ENCODE measurements at regions of chr5 and their contacts with region 1.

Region 1: DNA sequence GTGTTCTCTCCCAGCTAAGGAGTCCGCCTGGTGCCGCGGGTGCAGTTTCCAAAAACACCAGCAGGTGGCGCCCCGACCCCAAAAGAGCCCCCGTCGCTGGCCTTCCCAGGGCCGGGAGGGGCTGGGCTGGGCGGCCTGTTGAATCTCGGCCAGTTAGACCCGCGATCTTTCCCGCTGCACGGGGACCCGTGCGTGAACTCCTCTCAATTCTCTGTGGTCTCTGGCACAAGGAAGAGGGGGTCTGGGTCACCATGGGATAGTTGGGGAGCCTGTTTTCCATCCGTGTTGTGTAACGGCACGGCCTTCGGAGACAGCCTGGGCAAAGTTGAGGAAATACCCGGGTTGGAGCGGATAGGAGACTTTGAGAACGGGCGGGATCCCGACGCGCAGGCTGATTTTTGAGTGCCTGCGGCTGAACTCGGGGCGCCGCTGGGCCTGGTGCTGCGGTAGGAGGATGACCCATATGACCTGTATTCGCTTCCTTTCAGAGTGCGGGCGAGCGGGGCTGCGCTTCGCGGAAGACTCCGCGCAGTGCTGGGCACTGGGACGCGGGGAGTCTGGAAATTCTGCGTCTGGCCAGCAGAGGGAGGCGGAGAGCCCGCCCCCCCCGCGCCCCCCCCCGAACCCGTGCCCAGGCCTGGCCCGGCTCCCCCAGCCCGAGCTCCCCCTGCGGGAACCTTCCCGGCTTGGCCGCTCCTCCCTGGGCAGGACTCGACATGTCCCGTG is 7.9 kb upstream of the PSD2 start:
- DNase-seq: peak; percentile 26
- ATAC-seq: peak; percentile 93
- H3K4me3 ChIP-seq: peak overlapping the region; percentile 75
- H3K27ac ChIP-seq: no peak overlapping the region
- H3K4me1 ChIP-seq: no peaks in the 10 kb centered on the region
- H3K27me3 ChIP-seq: peaks cover 0 to 1% of the 10 kb centered on the region in 2 experiments; a peak in 3 of 4 replicates
- CTCF ChIP-seq: peak; percentile 92 to 98 (median 95)
- EP300 ChIP-seq: no peak
- POLR2A ChIP-seq: no peak
- RAD21 ChIP-seq: peak; percentile 96

Region 2: DNA sequence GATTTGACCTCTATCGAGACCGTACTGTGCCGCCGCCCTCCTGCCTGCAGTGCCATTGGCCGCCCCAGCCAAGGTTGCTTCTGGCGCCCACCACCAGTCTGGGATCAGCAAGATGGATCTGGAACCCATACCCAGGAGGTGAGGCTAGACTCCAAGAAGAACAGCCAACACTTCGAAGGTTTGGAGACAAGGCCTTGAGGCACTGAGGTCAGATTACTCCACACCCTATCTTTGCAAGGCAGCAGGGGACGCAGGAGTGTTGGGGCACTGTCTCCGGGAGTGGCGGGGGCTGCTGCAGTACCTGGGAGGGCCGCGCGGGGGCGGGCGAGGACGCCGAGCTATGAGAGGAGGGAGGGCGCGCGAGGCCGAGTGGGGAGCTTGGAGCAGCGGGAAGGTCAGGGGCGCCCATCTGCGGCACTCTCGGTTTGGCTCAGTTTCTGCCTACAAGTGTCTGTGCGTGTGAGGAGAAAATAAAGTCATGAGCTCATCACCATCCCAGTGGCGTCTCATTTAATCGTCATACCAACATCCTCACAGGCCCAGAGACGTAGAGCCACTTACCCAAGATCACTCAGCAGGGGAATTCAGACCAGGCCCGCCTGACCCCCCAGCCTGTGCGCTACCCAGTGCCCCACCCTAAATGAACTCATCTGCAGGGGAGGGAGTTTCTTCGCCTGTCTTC is 12.6 kb before region 1 on chr5:
- CTCF ChIA-PET with region 1: interaction called, 45 read pairs
- POLR2A ChIA-PET with region 1: no interaction called
- RAD21 ChIA-PET with region 1: interaction called, 13 read pairs
- SMC1A ChIA-PET with region 1: interaction called, 11 read pairs
- in situ Hi-C with region 1: no loop called
- intact Hi-C with region 1: no loop called
- DNase-seq: no peak
- ATAC-seq: peak; percentile 98
- H3K4me3 ChIP-seq: no peak overlapping the region
- H3K27ac ChIP-seq: no peak overlapping the region
- H3K4me1 ChIP-seq: peaks cover 7% of the 10 kb centered on the region; the same call in 1 of the 2 replicates
- H3K27me3 ChIP-seq: peaks cover 0 to 3% of the 10 kb centered on the region in 2 experiments; a peak in 1 of 4 replicates
- CTCF ChIP-seq: peak; percentile 78 to 98 (median 90)
- EP300 ChIP-seq: no peak
- POLR2A ChIP-seq: no peak
- RAD21 ChIP-seq: peak; percentile 47

Region 3: GRCh38 chr5:139849942-139850341 is 62.2 kb after region 1 on chr5:
- CTCF ChIA-PET with region 1: interaction called, 146 read pairs
- POLR2A ChIA-PET with region 1: interaction called, 3 read pairs
- RAD21 ChIA-PET with region 1: interaction called, 11 read pairs
- SMC1A ChIA-PET with region 1: interaction called, 41 read pairs
- in situ Hi-C with region 1: no loop called
- intact Hi-C with region 1: no loop called
- DNase-seq: no peak
- ATAC-seq: no peak
- H3K4me3 ChIP-seq: no peak overlapping the region
- H3K27ac ChIP-seq: no peak overlapping the region
- H3K4me1 ChIP-seq: no peaks in the 10 kb centered on the region
- H3K27me3 ChIP-seq: no peaks in the 10 kb centered on the region; a peak in 1 of 4 replicates
- CTCF ChIP-seq: no peak
- EP300 ChIP-seq: no peak
- POLR2A ChIP-seq: no peak
- RAD21 ChIP-seq: no peak

Region 4: DNA sequence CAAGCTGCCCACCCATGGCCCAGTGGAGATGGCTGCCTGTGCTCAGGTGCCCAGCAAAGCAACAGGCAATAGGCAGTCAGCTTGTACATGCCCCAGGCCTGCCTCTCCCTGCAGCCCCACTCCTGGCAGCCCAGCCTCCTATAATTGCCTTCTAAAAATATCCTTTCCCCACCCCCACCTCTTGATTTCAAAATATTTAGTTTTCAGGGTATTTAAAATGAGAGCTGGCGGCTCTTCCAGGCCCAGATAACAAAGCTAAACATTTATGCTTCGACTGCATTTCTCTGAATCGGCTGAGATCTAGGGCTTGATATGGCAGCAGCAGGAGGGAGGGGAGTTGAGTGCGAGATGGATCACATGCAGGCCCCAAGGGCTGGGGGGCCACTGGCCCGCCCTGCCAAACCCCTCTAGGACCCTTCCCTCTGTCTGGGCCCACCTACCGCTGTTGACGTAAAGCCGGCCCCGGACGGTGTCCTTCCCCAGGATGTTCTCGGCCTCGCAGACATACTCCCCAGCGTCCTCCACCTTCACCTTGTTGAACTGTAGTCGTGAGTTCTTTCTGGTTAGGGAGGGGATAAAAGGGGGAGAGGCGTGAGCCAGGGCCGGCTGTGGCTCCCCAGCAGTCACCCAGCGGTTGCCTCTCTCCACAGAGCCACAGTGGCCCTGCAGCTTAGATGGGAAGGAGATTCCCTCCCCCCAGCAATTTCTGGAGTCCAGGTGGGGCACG is 92.8 kb after region 1 on chr5:
- CTCF ChIA-PET with region 1: no interaction called
- POLR2A ChIA-PET with region 1: no interaction called
- RAD21 ChIA-PET with region 1: no interaction called
- SMC1A ChIA-PET with region 1: no interaction called
- in situ Hi-C with region 1: no loop called
- intact Hi-C with region 1: no loop called
- DNase-seq: no peak
- ATAC-seq: no peak
- H3K4me3 ChIP-seq: no peak overlapping the region
- H3K27ac ChIP-seq: no peak overlapping the region
- H3K4me1 ChIP-seq: no peaks in the 10 kb centered on the region
- H3K27me3 ChIP-seq: no peaks in the 10 kb centered on the region
- CTCF ChIP-seq: no peak
- EP300 ChIP-seq: no peak
- POLR2A ChIP-seq: no peak
- RAD21 ChIP-seq: no peak

Region 5: GRCh38 chr5:139942243-139942642 is 154.5 kb after region 1 on chr5:
- CTCF ChIA-PET with region 1: interaction called, 11 read pairs
- POLR2A ChIA-PET with region 1: no interaction called
- RAD21 ChIA-PET with region 1: interaction called, 4 read pairs
- SMC1A ChIA-PET with region 1: interaction called, 3 read pairs
- in situ Hi-C with region 1: no loop called
- intact Hi-C with region 1: no loop called
- DNase-seq: no peak
- ATAC-seq: no peak
- H3K4me3 ChIP-seq: no peak overlapping the region
- H3K27ac ChIP-seq: no peak overlapping the region
- H3K4me1 ChIP-seq: peaks cover 7% of the 10 kb centered on the region
- H3K27me3 ChIP-seq: no peaks in the 10 kb centered on the region
- CTCF ChIP-seq: no peak
- EP300 ChIP-seq: no peak
- POLR2A ChIP-seq: no peak
- RAD21 ChIP-seq: no peak

Region 6: GRCh38 chr5:140042643-140043500 is 255.1 kb after region 1 on chr5 and contains the start of gene NRG2:
- CTCF ChIA-PET with region 1: interaction called, 6 read pairs
- POLR2A ChIA-PET with region 1: no interaction called
- RAD21 ChIA-PET with region 1: interaction called, 5 read pairs
- SMC1A ChIA-PET with region 1: interaction called, 3 read pairs
- in situ Hi-C with region 1: no loop called
- intact Hi-C with region 1: loop called (anchors 10 kb)
- DNase-seq: no peak
- ATAC-seq: peak; percentile 82
- H3K4me3 ChIP-seq: peak within 1 kb of the TSS; percentile 89
- H3K27ac ChIP-seq: peak within 1 kb of the TSS; percentile 46
- H3K4me1 ChIP-seq: peaks cover 13% of the 10 kb centered on the region; the same call in 1 of the 2 replicates
- H3K27me3 ChIP-seq: no peaks in the 10 kb centered on the region
- CTCF ChIP-seq: peak; percentile 55 to 78 (median 76)
- EP300 ChIP-seq: no peak
- POLR2A ChIP-seq: peak; percentile 48
- RAD21 ChIP-seq: peak; percentile 17; the same call in 1 of the 2 replicates
- polyA plus RNA-seq, gene NRG2: 0.10 to 0.15 TPM

Region 7: DNA sequence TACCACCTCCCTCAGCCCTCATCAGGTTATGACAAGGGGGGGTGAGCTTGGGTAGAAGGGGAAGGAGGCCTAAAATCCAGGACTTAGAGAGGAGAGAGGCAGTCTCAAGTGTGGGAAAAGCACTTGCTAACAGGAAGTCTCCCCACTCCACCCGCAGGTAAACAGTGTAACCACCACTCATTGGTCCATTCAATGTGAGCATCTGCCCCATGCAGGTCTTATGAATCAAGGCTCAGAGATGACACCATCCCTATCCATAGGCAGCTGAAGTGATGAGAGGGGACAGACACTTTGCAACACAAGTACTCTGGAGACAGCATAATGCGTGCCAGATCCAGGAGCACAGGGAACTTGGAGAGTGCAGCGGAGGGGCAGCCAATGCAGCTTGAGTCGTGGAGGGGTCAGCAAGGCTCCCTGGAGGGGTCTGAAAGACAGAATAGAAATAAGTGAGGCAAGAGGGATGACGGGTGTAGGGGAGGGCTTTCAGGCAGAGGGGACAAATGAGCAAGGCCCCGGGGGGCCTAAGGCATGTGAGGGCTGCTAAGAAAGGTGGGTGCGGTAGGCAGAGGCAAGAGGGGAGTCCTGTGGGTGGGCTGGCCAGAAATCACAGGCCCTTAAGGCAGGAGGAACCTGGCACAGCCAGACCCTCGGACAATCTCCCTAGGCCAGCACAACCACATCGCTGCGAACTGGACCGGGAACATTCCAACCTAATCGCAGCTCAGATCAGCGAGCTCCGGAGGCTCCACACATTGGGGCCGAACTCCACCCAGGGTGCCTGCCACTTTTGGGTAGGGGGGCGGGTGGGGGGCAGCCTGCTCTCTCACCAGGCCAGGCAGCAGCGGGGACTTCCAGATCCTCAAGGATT is 364.2 kb after region 1 on chr5:
- CTCF ChIA-PET with region 1: interaction called, 15 read pairs
- POLR2A ChIA-PET with region 1: no interaction called
- RAD21 ChIA-PET with region 1: no interaction called
- SMC1A ChIA-PET with region 1: interaction called, 8 read pairs
- in situ Hi-C with region 1: loop called (anchors 5 kb)
- intact Hi-C with region 1: loop called (anchors 1 kb)
- DNase-seq: no peak
- ATAC-seq: no peak
- H3K4me3 ChIP-seq: no peak overlapping the region
- H3K27ac ChIP-seq: no peak overlapping the region
- H3K4me1 ChIP-seq: peaks cover 4% of the 10 kb centered on the region
- H3K27me3 ChIP-seq: no peaks in the 10 kb centered on the region
- CTCF ChIP-seq: no peak
- EP300 ChIP-seq: no peak
- POLR2A ChIP-seq: no peak
- RAD21 ChIP-seq: no peak